ENCODE measurements at regions of chr12 and their contacts with region 1.

Region 1: GRCh38 chr12:123043536-123044001 is 63.1 kb downstream of the ARL6IP4 start:
- DNase-seq: peak; percentile 60
- ATAC-seq: peak; percentile 93
- H3K4me3 ChIP-seq: no peak overlapping the region
- H3K27ac ChIP-seq: no peak overlapping the region
- H3K4me1 ChIP-seq: 0 out of 2 replicates have a peak, but pooled peaks cover 5% of the 10 kb centered on the region
- H3K27me3 ChIP-seq: no peaks in the 10 kb centered on the region
- CTCF ChIP-seq: peak; percentile 93
- EP300 ChIP-seq: no peak
- POLR2A ChIP-seq: no peak
- RAD21 ChIP-seq: peak; percentile 90

Region 2: DNA sequence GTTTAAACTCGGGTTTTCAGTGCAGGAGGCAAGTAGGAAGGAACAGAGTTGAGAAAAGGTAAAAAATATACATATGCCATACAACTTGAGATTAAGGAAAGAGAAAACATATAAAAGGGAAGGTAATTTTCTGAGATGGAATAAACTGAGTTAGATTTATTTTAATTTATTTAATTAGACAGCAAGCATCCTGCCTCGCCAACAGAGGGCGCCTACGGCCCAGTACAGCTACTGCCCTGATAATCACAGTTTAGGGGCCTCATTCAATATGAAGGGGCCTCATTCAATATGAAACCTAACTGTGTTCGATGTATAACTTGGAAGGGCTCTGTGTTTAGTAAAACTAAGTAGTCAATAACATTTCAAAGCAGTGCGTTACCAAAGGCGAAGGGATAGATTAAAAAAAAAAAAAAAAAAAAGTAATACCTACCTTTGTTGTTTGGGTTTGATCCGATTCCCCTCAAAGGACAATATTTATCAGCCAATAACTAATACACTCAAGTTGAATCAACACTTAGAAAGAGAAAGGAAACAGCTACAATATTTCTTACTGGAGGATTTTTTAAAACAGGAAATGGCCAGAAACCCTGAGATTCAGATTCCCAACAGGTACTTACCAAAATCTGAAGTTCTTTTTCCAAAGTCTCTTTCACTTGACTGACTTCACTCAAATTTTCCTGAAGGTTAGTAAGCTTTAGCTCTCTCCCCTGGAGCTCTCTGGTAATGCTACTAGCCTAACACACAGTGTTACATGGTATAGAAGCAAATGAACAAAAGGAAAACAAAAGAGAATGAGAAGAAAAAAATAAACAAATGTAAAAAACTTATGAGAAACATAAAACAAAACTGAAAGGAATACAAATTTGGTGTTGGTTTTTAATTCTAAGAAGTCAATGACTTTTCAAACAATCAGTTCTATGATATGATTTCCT is 707.3 kb before region 1 on chr12:
- CTCF ChIA-PET with region 1: no interaction called
- POLR2A ChIA-PET with region 1: no interaction called
- in situ Hi-C with region 1: no loop called
- intact Hi-C with region 1: no loop called
- DNase-seq: peak; percentile 23
- ATAC-seq: peak; percentile 60
- H3K4me3 ChIP-seq: no peak overlapping the region
- H3K27ac ChIP-seq: no peak overlapping the region
- H3K4me1 ChIP-seq: peaks cover 10% of the 10 kb centered on the region
- H3K27me3 ChIP-seq: no peaks in the 10 kb centered on the region
- CTCF ChIP-seq: peak; percentile 62
- EP300 ChIP-seq: no peak
- POLR2A ChIP-seq: no peak
- RAD21 ChIP-seq: peak; percentile 50; the same call in 1 of the 2 replicates

Region 3: DNA sequence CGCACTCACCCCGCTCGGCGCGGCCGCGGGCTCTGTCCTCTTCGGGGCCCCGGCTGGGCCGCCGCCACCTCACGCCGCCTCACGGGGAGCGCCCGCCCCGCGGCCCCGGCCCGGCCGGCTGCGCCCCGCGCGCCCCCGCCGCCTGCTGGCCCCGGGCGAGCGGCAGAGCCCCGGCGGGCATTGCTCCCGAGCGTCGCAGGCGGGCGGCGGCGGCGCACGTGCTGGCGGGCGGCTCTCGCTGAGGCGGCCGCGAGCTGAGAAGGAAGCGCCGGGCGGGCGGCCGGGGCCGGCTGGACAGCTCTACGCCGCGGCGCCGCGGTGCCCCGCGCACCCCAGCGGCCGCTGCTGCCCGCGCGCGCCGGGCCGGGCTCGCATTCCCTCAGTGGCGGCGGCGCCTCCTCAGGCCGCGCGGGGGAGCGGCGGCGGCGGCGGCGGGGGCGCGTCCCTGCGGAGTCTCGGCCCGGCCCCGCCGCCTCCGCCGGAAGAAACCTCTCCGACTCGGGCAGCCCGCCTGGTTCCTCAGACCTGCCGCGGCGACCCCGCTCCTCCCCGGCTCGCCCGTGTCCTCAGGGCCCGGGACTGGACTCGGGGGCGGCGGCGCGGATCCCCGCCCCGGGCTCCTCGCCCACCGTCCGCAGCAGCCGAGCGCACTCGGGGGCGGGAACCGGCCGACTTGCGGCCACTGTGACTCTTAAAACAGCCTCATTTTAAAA is 107.3 kb after region 1 on chr12 and contains the start of gene PITPNM2:
- CTCF ChIA-PET with region 1: interaction called, 4 read pairs
- POLR2A ChIA-PET with region 1: no interaction called
- in situ Hi-C with region 1: no loop called
- intact Hi-C with region 1: loop called (anchors 5 kb)
- DNase-seq: no peak
- ATAC-seq: peak; percentile 70
- H3K4me3 ChIP-seq: peak within 1 kb of the TSS; percentile 90 to 98 (median 95)
- H3K27ac ChIP-seq: peak within 1 kb of the TSS; percentile 63
- H3K4me1 ChIP-seq: peaks cover 71% of the 10 kb centered on the region
- H3K27me3 ChIP-seq: no peaks in the 10 kb centered on the region
- CTCF ChIP-seq: no peak; the same call in 1 of the 2 replicates
- EP300 ChIP-seq: no peak
- POLR2A ChIP-seq: no peak
- RAD21 ChIP-seq: peak; percentile 57; the same call in 1 of the 2 replicates
- total RNA-seq, gene PITPNM2: 4.2 and 4.7 TPM in 2 replicates

Measured in HepG2 (cell line).